Tibial artery (tissue), 4 donors: ENCODE measurements at regions of chr16 and their contacts with region 1.

Region 1: DNA sequence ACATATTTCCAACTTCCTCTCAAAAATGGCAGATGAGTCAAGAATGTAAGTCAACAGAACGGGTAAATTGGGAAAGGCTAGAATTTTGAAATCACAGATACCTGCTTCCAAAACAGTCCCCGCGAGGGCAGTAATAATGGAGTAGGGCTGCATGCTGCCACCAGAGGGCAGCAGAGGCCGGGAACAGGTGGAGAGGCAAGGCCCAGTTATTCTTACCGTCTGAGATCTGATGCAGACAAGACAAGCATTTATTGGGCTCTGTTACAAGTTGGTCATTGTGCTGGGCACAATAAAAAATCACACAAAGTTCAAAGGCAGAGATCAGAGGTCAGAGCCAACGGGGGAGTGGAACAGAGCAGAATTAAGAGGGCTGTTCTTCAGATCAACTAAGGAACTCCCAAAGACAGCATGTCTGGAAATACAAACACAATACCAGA is 8.8 kb upstream of the MLKL start:
- DNase-seq: peak; percentile 74 to 84
- H3K4me3 ChIP-seq: no peak overlapping the region
- H3K27ac ChIP-seq: no peak overlapping the region
- H3K4me1 ChIP-seq: no peaks in the 10 kb centered on the region
- H3K27me3 ChIP-seq: no peaks in the 10 kb centered on the region
- CTCF ChIP-seq: peak; percentile 86 to 97

Region 2: DNA sequence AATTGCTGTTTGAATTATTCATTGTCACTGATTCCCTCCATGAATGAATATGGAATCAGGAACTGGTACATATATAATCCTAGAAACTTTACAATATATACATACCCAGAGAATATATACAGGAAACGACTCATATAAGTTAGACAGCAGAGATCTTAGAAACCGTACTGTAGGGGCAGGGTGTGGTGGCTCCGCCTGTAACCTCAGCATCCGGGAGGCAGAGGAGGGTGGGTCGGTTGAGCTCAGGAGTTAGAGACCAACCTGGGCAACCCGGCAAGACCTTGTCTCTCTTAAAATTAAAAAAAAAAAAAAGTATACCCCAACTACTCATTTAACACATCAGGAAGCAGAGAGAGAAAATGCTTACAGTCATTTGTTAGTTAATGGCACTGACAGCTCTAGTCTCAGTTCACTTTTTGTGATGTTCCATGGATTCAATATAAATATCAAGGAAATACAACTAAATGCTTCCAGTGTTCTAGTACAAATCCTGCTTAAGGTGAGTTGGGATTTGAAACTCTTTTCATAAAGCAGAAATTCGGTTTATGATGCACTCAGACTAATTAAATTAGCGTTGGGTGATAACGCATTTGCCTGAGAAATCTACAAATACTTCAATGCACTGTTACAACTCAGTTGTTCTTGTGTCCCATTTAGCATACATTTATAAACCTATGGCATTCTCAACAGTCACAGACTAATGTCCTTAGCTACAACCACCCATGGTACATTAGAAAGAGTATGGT is 108.2 kb before region 1 on chr16:
- intact Hi-C with region 1: no loop called
- DNase-seq: peak in 1 of 2 donors; percentile 3
- H3K4me3 ChIP-seq: no peak overlapping the region
- H3K27ac ChIP-seq: no peak overlapping the region
- H3K4me1 ChIP-seq: peaks cover 0 to 49% (median 28%) of the 10 kb centered on the region in 4 donors
- H3K27me3 ChIP-seq: no peaks in the 10 kb centered on the region
- CTCF ChIP-seq: no peak

Region 3: GRCh38 chr16:74793571-74793970 is 84.1 kb after region 1 on chr16:
- intact Hi-C with region 1: no loop called
- DNase-seq: no peak
- H3K4me3 ChIP-seq: no peak overlapping the region
- H3K27ac ChIP-seq: no peak overlapping the region
- H3K4me1 ChIP-seq: no peaks in the 10 kb centered on the region
- H3K27me3 ChIP-seq: peaks cover 0 to 11% of the 10 kb centered on the region in 2 donors
- CTCF ChIP-seq: no peak

Region 4: DNA sequence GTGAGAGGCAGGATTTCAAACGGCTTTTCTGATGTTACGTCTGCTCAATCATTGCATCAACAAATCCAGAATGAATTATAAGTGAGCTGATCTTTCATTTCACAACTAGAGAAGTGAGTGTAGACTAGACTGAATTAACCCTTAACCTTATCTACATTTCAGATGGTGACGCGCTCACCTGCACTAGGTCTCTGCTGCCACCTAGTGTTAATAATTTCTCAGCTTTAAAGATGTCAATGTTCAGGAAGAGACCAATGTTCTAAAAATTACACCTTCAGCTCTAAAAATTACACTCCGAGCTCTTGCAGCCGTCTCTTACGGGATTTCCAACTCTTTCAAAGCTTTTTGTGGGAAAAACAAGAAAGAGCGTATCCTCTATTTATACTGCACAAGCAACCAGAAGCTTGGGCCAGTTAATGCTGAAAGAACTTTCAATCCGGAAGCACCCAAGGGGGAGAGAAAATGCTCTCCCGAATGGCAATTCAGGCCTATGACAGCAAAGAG is 153.3 kb after region 1 on chr16:
- intact Hi-C with region 1: loop called (anchors 5 kb)
- DNase-seq: no peak
- H3K4me3 ChIP-seq: no peak overlapping the region
- H3K27ac ChIP-seq: no peak overlapping the region
- H3K4me1 ChIP-seq: no peaks in the 10 kb centered on the region
- H3K27me3 ChIP-seq: no peaks in the 10 kb centered on the region
- CTCF ChIP-seq: peak; percentile 63 to 68

Region 5: DNA sequence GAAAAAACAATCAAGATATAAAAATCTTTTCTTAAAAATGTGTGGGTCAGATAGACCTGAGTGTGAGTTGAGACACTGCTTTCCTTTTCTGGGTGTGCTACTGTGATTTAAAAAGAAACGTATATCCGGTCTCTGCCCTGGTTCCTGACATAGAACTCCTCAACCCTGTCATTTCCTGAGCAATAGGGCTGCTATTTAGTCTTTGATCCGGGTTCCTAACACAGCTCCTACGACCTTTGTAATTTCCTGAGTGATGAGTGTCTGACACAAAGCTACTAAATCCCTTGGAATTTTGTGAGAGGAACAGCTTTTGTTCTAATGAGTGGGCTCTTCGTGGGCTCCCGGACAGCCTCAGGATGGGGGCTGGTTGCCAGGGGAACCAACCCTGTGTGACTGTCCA is 159.0 kb after region 1 on chr16:
- intact Hi-C with region 1: loop called (anchors 5 kb)
- DNase-seq: no peak
- H3K4me3 ChIP-seq: no peak overlapping the region
- H3K27ac ChIP-seq: no peak overlapping the region
- H3K4me1 ChIP-seq: no peaks in the 10 kb centered on the region
- H3K27me3 ChIP-seq: no peaks in the 10 kb centered on the region
- CTCF ChIP-seq: no peak